Heart right ventricle (tissue), 16 donors: ENCODE measurements at regions of chr6 and their contacts with region 1.

Region 1: DNA sequence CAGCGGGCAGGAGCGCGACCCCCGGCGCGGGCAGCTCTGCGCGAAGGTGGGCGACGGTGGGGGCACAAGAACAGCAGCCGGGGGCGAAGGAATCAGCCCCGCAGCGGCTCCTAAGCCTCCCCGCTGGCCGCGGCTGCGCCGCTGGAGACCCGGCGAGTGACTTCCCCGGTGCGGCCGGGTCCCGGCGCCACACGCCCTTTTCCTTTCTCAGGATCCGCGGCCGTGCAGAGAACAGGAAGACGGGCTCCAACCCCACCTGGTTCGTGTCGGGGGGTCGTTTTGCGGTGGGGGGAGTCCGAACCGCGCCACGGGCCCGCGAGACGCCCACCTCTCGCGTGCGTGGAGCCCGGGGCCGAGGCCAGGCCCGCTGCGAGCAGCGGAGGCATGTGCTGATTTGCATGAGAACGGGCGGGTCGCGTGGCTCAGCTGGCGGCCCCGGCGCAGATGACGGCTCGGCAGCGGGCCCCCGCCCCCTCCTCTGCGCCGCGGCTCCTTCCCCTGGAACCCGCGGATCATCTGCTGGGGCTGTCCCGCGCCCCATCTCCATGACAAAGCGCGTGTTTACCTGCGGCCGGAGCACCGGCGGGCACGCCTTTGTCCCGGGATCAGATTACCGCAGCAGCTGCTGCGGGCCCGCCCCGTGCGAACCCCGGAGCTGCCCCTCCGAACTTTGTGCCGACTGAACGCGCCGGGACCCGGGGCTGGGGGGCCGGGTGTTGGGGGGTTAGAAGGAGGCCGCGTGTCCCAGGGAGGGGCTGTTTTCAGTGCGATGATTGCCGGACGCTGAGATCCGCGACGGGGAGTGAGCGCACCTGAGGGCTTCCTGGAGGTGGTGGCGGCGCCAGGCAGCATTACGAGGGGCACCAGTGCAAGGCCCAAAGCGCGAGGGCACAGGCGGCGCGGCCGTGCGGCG is 4.9 kb upstream of the DLL1 start:
- DNase-seq: peak in 1 of 2 donors; percentile 42
- ATAC-seq: peak in 1 of 8 donors; percentile 42
- H3K4me3 ChIP-seq: peak overlapping the region; percentile 40 to 62 (median 55)
- H3K27ac ChIP-seq: peak overlapping the region in 1 of 10 donors; percentile 15
- H3K4me1 ChIP-seq: peaks cover 24 to 52% (median 39%) of the 10 kb centered on the region in 9 donors
- H3K27me3 ChIP-seq: peaks cover 11 to 96% (median 34%) of the 10 kb centered on the region in 7 donors
- CTCF ChIP-seq: no peak

Region 2: GRCh38 chr6:169789982-169790927 is 505.5 kb before region 1 on chr6:
- intact Hi-C with region 1: loop called in 1 of 10 experiments (anchors 10 kb)
- DNase-seq: peak; percentile 55 to 70
- ATAC-seq: peak; percentile 93 to 98 (median 96)
- H3K4me3 ChIP-seq: peak overlapping the region in 9 of 10 donors; percentile 39 to 64 (median 57)
- H3K27ac ChIP-seq: peak overlapping the region in 6 of 10 donors; percentile 17 to 68 (median 43)
- H3K4me1 ChIP-seq: peaks cover 0 to 16% (median 10%) of the 10 kb centered on the region in 9 donors
- H3K27me3 ChIP-seq: peaks cover 0 to 24% (median 4%) of the 10 kb centered on the region in 7 donors
- CTCF ChIP-seq: peak; percentile 90 to 98 (median 96)

Region 3: GRCh38 chr6:169969372-169970099 is 326.2 kb before region 1 on chr6:
- intact Hi-C with region 1: loop called in 9 of 10 experiments (anchors 2 to 10 kb)
- DNase-seq: peak in 1 of 2 donors; percentile 9
- ATAC-seq: no peak
- H3K4me3 ChIP-seq: no peak overlapping the region
- H3K27ac ChIP-seq: no peak overlapping the region
- H3K4me1 ChIP-seq: no peaks in the 10 kb centered on the region
- H3K27me3 ChIP-seq: no peaks in the 10 kb centered on the region
- CTCF ChIP-seq: no peak

Region 4: DNA sequence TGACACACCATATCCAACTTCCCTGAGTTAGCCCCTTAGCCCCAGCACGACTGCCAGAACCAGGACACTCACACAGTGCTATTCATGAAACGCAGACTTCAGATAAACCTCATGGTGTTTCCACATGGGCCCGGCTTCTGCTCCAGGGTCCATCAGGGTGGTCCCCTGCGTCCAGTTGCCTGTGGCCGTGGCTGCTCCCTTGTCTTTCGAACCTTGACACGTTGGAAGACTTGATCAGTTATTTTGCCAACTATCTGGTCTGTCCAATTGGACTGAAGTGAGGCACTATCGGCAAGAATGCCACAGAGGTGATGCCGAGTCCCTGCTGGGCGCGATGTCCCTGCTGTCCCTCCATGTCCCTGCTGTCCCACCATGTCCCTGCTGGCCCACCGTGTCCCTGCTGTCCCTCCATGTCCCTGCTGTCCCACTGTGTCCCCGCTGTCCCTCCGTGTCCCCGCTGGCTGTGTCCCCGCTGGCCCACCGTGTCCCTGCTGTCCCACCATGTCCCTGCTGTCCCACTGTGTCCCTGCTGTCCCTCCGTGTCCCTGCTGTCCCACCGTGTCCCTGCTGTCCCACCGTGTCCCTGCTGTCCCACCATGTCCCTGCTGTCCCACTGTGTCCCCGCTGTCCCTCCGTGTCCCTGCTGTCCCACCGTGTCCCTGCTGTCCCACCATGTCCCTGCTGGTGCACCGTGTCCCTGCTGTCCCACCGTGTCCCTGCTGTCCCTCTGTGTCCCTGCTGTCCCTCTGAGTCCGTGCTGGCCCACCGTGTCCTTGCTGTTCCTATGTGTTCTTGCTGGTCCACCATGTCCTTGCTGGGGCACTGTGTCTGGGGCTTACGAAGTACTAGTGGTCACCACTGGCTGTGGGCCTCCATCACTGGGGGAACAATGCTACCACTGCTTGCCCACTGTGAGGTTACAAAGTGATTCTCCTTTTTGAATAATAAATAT is 256.3 kb before region 1 on chr6:
- intact Hi-C with region 1: loop called in 2 of 10 experiments (anchors 5 kb)
- DNase-seq: no peak
- ATAC-seq: no peak
- H3K4me3 ChIP-seq: no peak overlapping the region
- H3K27ac ChIP-seq: no peak overlapping the region
- H3K4me1 ChIP-seq: peaks cover 0 to 28% (median 11%) of the 10 kb centered on the region in 9 donors
- H3K27me3 ChIP-seq: no peaks in the 10 kb centered on the region
- CTCF ChIP-seq: no peak

Region 5: GRCh38 chr6:170178561-170179477 is 116.9 kb before region 1 on chr6:
- intact Hi-C with region 1: loop called in 1 of 10 experiments (anchors 5 kb)
- DNase-seq: no peak
- ATAC-seq: peak in 4 of 8 donors; percentile 29 to 59 (median 51)
- H3K4me3 ChIP-seq: no peak overlapping the region
- H3K27ac ChIP-seq: peak overlapping the region in 2 of 10 donors; percentile 14 to 27
- H3K4me1 ChIP-seq: peaks cover 0 to 20% (median 7%) of the 10 kb centered on the region in 9 donors
- H3K27me3 ChIP-seq: no peaks in the 10 kb centered on the region
- CTCF ChIP-seq: no peak

Region 6: DNA sequence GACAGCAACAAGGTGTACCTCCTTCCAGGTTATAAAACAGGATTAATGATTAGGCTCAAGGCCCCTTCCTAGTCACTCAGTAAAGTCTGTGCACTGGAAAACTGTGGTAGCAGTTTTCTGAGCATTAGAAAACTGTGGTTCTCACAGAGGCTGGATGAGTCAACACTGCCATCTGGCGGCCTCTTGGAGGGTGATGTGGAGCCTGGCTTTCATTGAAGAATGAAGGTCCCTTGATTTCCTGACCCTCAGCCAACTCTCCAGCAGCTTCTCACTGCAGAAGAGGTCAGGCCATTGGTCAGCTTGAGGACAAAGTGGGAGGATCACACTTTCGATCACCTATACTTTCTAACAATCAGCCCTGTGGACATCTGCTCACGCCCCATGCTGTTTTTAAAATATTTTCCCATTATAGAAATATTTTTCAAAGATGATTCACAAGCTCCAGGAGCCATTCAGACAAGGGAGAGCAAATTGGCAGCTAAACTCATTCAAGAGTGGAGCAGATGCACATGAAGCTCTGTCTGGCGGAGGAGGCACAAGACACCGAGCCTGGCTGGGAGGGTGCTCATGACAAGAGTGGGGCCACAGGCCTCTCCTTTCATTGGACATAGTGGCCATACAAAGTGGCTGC is 234.2 kb after region 1 on chr6:
- intact Hi-C with region 1: loop called in 4 of 10 experiments (anchors 5 to 10 kb)
- DNase-seq: peak; percentile 75 to 78
- ATAC-seq: peak; percentile 75 to 90 (median 84)
- H3K4me3 ChIP-seq: no peak overlapping the region
- H3K27ac ChIP-seq: no peak overlapping the region
- H3K4me1 ChIP-seq: peaks cover 0 to 11% (median 0%) of the 10 kb centered on the region in 9 donors
- H3K27me3 ChIP-seq: no peaks in the 10 kb centered on the region
- CTCF ChIP-seq: peak; percentile 82 to 93 (median 90)

Region 7: DNA sequence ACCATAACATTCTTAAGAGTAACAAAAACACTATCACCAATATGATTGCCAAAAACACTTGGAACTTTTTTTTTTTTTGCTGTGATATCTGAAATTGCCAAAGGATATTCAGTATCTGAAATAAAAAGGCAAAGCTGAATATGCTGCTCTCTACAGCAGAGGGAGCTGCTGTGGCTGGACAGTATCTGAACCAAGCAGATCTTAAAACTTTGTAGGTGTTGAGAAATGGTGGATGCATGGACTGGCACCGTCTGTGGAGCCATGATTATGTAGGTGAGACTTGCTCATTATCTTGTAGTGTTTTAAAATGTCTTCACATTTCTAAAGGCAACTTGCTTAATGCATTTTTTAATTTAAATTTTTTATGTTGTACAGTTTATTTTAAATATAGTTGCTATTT is 279.5 kb after region 1 on chr6:
- intact Hi-C with region 1: no loop called
- DNase-seq: no peak
- ATAC-seq: no peak
- H3K4me3 ChIP-seq: no peak overlapping the region
- H3K27ac ChIP-seq: no peak overlapping the region
- H3K4me1 ChIP-seq: no peaks in the 10 kb centered on the region
- H3K27me3 ChIP-seq: no peaks in the 10 kb centered on the region
- CTCF ChIP-seq: peak in 1 of 9 donors; percentile 5